Mammary epithelial cell (primary cell): ENCODE measurements at regions of chr7 and their contacts with region 1.

Region 1: DNA sequence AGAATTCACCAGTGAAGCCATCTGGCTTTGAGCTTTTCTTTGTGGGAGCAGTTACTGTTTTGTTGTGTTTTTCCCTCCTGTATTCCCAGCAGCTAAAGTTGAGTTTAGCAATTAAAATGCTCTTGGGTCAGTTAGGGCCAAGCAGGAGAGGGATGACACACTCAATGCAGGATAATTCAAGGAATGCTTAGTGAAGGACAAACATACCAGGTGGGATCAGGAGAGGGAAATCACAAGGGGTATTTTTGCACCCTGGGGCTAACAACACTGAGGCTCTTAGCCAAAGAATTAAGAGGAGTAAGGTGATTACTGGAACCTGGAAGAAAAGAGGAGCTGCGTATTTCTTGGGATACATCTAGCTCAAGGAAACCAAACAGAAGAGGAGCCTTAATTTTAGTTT is 82.4 kb upstream of the KCND2 start:
- DNase-seq: no peak
- H3K4me3 ChIP-seq: no peak overlapping the region
- H3K27ac ChIP-seq: no peak overlapping the region
- H3K4me1 ChIP-seq: no peaks in the 10 kb centered on the region
- H3K27me3 ChIP-seq: no peaks in the 10 kb centered on the region
- CTCF ChIP-seq: no peak

Region 2: GRCh38 chr7:120097020-120097419 is 93.5 kb before region 1 on chr7:
- CTCF ChIA-PET with region 1: no interaction called
- dilution Hi-C with region 1: loop called (anchors 5 kb)
- in situ Hi-C with region 1: no loop called
- intact Hi-C with region 1: no loop called
- DNase-seq: no peak
- H3K4me3 ChIP-seq: no peak overlapping the region
- H3K27ac ChIP-seq: no peak overlapping the region
- H3K4me1 ChIP-seq: no peaks in the 10 kb centered on the region
- H3K27me3 ChIP-seq: no peaks in the 10 kb centered on the region
- CTCF ChIP-seq: no peak